Activated B cell treated with CpG ODN at 0.5 μM for 24 hours (primary cell): ENCODE measurements at regions of chr1 and their contacts with region 1.

Region 1: GRCh38 chr1:198756470-198756869 is 117.6 kb downstream of the PTPRC start:
- DNase-seq: no peak
- ATAC-seq: no peak
- H3K4me3 Mint-ChIP-seq: no peak overlapping the region
- H3K27ac Mint-ChIP-seq: peak overlapping the region; percentile 0
- H3K4me1 Mint-ChIP-seq: peaks cover 30% of the 10 kb centered on the region
- H3K27me3 Mint-ChIP-seq: no peaks in the 10 kb centered on the region
- CTCF ChIP-seq: no peak

Region 2: DNA sequence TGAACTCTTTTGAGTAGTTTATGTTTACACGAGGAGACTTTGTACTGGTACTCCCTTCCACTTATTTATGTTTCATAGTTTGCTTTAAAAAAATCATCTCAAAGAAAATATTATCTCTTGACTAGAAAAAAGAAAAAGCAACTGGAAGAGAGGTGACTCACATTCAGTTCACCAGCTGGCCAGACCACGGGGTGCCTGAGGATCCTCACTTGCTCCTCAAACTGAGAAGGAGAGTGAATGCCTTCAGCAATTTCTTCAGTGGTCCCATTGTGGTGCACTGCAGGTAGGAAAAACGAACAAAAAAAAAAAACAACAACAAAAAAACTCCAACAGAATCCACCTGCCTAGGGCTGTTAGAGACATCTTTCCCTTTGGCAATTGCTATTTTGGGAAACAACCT is 14.7 kb before region 1 on chr1:
- CTCF ChIA-PET with region 1: interaction called, 3 read pairs
- POLR2A ChIA-PET with region 1: no interaction called
- intact Hi-C with region 1: loop called (anchors 2 kb)
- DNase-seq: no peak
- ATAC-seq: no peak
- H3K4me3 Mint-ChIP-seq: no peak overlapping the region
- H3K27ac Mint-ChIP-seq: peak overlapping the region; percentile 24
- H3K4me1 Mint-ChIP-seq: peaks cover 4% of the 10 kb centered on the region
- H3K27me3 Mint-ChIP-seq: no peaks in the 10 kb centered on the region
- CTCF ChIP-seq: no peak

Region 3: DNA sequence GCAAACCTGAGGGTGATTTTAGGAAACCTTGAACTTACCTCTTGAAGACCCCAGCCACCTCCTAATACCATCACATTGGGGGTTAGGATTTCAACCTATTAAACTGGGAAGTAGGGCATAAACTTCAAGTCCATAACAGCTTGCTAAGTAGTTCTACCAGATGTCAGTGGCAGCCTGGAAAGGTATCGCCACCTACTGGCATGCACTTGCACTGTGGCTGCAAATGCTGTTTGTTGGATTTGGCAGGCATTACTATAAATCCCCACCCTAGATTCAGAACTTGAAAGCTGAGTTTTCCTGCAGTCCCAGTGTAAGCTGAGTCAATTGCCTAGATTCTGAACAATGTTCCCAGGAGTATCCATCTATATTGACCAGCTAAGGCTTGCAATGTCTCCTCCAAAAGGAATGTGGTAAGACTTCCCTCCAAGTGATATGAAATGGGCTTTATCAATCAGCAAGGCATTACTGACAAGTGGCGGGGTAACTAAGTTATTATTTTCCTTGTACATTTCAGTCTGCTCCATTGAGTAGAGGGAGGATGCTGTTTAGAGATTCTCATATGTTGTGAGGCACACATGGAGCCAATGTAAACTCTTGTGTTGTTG is 356.9 kb after region 1 on chr1:
- CTCF ChIA-PET with region 1: interaction called, 7 read pairs
- POLR2A ChIA-PET with region 1: no interaction called
- intact Hi-C with region 1: loop called (anchors 1 kb)
- DNase-seq: peak; percentile 21
- ATAC-seq: peak; percentile 57
- H3K4me3 Mint-ChIP-seq: no peak overlapping the region
- H3K27ac Mint-ChIP-seq: no peak overlapping the region
- H3K4me1 Mint-ChIP-seq: peaks cover 5% of the 10 kb centered on the region
- H3K27me3 Mint-ChIP-seq: no peaks in the 10 kb centered on the region
- CTCF ChIP-seq: no peak

Region 4: DNA sequence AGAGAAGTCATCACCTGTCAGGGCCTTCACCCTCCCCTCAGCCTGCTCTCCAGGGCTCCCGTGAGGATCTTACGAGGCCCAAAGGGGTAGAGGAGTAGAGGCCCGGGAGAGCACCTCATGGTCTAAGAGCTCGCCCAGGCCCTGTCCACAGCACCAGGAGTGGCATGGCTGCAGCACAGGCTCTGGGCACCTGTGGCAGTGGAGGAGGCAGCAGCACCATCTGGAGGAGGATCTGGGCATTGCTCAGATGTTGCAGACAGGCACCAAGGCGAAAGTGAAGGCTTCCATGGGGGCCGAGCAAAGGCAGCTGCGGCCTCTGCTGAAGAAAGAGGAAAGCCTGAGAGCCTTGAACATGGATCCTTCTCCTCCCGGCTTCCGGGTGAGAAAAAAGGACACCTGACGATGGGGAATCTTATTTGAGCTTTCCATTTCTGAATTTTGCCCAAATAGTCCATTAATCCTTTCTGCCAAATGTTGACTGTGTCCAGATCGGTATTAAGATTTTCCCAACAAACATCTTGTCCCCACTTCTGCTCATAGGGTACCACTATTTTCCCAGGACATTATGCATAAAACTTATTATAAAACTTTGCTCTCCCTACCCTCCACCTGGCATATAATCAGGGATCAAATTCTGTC is 487.1 kb after region 1 on chr1:
- CTCF ChIA-PET with region 1: interaction called, 4 read pairs
- POLR2A ChIA-PET with region 1: no interaction called
- intact Hi-C with region 1: loop called (anchors 1 kb)
- DNase-seq: peak; percentile 54
- ATAC-seq: peak; percentile 97
- H3K4me3 Mint-ChIP-seq: no peak overlapping the region
- H3K27ac Mint-ChIP-seq: no peak overlapping the region
- H3K4me1 Mint-ChIP-seq: peaks cover 17% of the 10 kb centered on the region
- H3K27me3 Mint-ChIP-seq: no peaks in the 10 kb centered on the region
- CTCF ChIP-seq: no peak

Region 5: GRCh38 chr1:199463521-199464128 is 707.2 kb after region 1 on chr1:
- CTCF ChIA-PET with region 1: no interaction called
- POLR2A ChIA-PET with region 1: no interaction called
- intact Hi-C with region 1: loop called (anchors 5 kb)
- DNase-seq: no peak
- ATAC-seq: no peak
- H3K4me3 Mint-ChIP-seq: no peak overlapping the region
- H3K27ac Mint-ChIP-seq: no peak overlapping the region
- H3K4me1 Mint-ChIP-seq: peaks cover 10% of the 10 kb centered on the region
- H3K27me3 Mint-ChIP-seq: no peaks in the 10 kb centered on the region
- CTCF ChIP-seq: no peak

Region 6: DNA sequence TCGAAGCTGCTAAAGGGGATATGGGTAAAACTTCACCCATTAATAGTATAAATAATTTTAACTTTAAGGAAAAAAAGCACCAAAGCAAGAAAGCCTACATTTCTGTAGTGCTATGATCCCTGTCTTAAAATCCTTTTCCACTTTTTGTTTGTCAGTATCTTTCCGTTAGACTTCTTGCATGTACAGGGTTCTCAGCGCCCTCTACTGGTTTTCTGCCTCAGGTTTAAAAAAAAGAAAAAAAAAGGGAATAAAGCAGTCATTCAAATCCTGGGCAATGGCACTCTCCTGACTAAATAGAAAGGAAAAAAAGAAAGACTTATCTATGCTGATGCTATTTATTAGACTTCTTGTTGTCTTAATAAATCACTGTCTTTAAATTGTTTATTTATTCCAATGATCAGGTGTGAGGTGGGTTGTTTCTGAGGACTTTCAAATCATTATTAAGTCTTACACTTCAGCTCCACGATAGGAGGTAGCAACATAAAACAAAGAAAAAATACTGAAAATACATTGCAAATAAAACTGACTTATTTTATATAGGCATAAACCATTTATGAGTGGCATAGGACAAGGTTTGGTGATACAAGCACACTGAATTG is 795.6 kb after region 1 on chr1:
- CTCF ChIA-PET with region 1: interaction called, 4 read pairs
- POLR2A ChIA-PET with region 1: no interaction called
- intact Hi-C with region 1: loop called (anchors 1 kb)
- DNase-seq: no peak
- ATAC-seq: no peak
- H3K4me3 Mint-ChIP-seq: no peak overlapping the region
- H3K27ac Mint-ChIP-seq: no peak overlapping the region
- H3K4me1 Mint-ChIP-seq: no peaks in the 10 kb centered on the region
- H3K27me3 Mint-ChIP-seq: peaks cover 6% of the 10 kb centered on the region
- CTCF ChIP-seq: peak; percentile 99

Region 7: DNA sequence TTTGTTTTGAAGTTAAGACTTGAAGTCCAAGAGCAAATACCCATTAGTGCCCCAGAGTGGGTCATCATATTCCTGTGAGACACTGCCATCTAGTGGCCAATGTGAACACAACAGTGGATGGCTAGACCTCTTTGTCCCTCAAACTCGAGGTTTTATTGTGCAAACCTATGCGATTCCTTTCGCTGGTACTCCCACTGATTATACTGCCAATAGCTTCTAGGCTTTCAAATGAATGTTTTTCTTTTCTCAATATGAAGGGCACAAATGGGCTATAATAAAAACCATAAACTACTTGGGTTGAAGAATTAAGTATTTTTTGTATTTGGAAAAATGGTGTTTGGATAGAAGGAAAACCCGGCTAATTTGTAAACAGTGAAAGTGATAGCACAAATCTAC is 1753.8 kb after region 1 on chr1:
- CTCF ChIA-PET with region 1: no interaction called
- POLR2A ChIA-PET with region 1: no interaction called
- intact Hi-C with region 1: loop called (anchors 5 kb)
- DNase-seq: no peak
- ATAC-seq: peak; percentile 78
- H3K4me3 Mint-ChIP-seq: no peak overlapping the region
- H3K27ac Mint-ChIP-seq: no peak overlapping the region
- H3K4me1 Mint-ChIP-seq: no peaks in the 10 kb centered on the region
- H3K27me3 Mint-ChIP-seq: peaks cover 17% of the 10 kb centered on the region
- CTCF ChIP-seq: peak; percentile 89